ENCODE measurements at regions of chr10 and their contacts with region 1.

Region 1: GRCh38 chr10:69451209-69451783 is at the start of gene TSPAN15:
- DNase-seq: peak; percentile 91 to 95
- ATAC-seq: peak; percentile 90
- H3K4me3 ChIP-seq: peak within 1 kb of the TSS; percentile 12 to 47
- H3K27ac ChIP-seq: no peak within 1 kb of the TSS
- H3K4me1 ChIP-seq: no peaks in the 10 kb centered on the region
- H3K27me3 ChIP-seq: no peaks in the 10 kb centered on the region
- total RNA-seq, gene TSPAN15: 12.8 to 16.8 TPM

Region 2: GRCh38 chr10:69392481-69393000 is 58.8 kb before region 1 on chr10:
- intact Hi-C with region 1: no loop called
- DNase-seq: peak; percentile 89 to 93
- ATAC-seq: peak; percentile 95
- H3K4me3 ChIP-seq: no peak overlapping the region
- H3K27ac ChIP-seq: no peak overlapping the region
- H3K4me1 ChIP-seq: no peaks in the 10 kb centered on the region
- H3K27me3 ChIP-seq: no peaks in the 10 kb centered on the region

Region 3: GRCh38 chr10:69408318-69409175 is 42.7 kb before region 1 on chr10:
- intact Hi-C with region 1: no loop called
- DNase-seq: peak; percentile 97 to 99
- ATAC-seq: peak; percentile 94
- H3K4me3 ChIP-seq: peak overlapping the region in 1 of 2 donors; percentile 2
- H3K27ac ChIP-seq: peak overlapping the region in 1 of 2 donors; percentile 60
- H3K4me1 ChIP-seq: no peaks in the 10 kb centered on the region
- H3K27me3 ChIP-seq: no peaks in the 10 kb centered on the region

Region 4: GRCh38 chr10:69481305-69481704 is 30.0 kb after region 1 on chr10:
- intact Hi-C with region 1: no loop called
- DNase-seq: peak in 1 of 2 donors; percentile 47
- ATAC-seq: no peak
- H3K4me3 ChIP-seq: no peak overlapping the region
- H3K27ac ChIP-seq: no peak overlapping the region
- H3K4me1 ChIP-seq: no peaks in the 10 kb centered on the region
- H3K27me3 ChIP-seq: no peaks in the 10 kb centered on the region

Region 5: GRCh38 chr10:69494626-69495558 is 43.6 kb after region 1 on chr10:
- intact Hi-C with region 1: loop called in 1 of 2 experiments (anchors 5 kb)
- DNase-seq: peak; percentile 33 to 72
- ATAC-seq: no peak
- H3K4me3 ChIP-seq: no peak overlapping the region
- H3K27ac ChIP-seq: no peak overlapping the region
- H3K4me1 ChIP-seq: no peaks in the 10 kb centered on the region
- H3K27me3 ChIP-seq: no peaks in the 10 kb centered on the region

Measured in aorta (tissue), 5 donors.